Tibial artery (tissue), 4 donors: ENCODE measurements at regions of chr5 and their contacts with region 1.

Region 1: GRCh38 chr5:147403651-147404640 is 105.9 kb downstream of the DPYSL3 start:
- DNase-seq: peak; percentile 87 to 94
- H3K4me3 ChIP-seq: peak overlapping the region; percentile 3 to 32
- H3K27ac ChIP-seq: peak overlapping the region; percentile 96 to 98
- H3K4me1 ChIP-seq: peaks cover 5 to 65% (median 43%) of the 10 kb centered on the region in 4 donors
- H3K27me3 ChIP-seq: no peaks in the 10 kb centered on the region
- CTCF ChIP-seq: peak in 1 of 2 experiments; percentile 8

Region 2: GRCh38 chr5:147453875-147454814 is 50.2 kb after region 1 on chr5:
- intact Hi-C with region 1: loop called (anchors 5 kb)
- DNase-seq: peak; percentile 84 to 95
- H3K4me3 ChIP-seq: peak overlapping the region; percentile 80 to 95
- H3K27ac ChIP-seq: peak overlapping the region; percentile 93 to 99
- H3K4me1 ChIP-seq: peaks cover 0 to 49% (median 36%) of the 10 kb centered on the region in 4 donors
- H3K27me3 ChIP-seq: no peaks in the 10 kb centered on the region
- CTCF ChIP-seq: peak; percentile 85 to 90